ENCODE measurements at regions of chr2 and their contacts with region 1.

Region 1: DNA sequence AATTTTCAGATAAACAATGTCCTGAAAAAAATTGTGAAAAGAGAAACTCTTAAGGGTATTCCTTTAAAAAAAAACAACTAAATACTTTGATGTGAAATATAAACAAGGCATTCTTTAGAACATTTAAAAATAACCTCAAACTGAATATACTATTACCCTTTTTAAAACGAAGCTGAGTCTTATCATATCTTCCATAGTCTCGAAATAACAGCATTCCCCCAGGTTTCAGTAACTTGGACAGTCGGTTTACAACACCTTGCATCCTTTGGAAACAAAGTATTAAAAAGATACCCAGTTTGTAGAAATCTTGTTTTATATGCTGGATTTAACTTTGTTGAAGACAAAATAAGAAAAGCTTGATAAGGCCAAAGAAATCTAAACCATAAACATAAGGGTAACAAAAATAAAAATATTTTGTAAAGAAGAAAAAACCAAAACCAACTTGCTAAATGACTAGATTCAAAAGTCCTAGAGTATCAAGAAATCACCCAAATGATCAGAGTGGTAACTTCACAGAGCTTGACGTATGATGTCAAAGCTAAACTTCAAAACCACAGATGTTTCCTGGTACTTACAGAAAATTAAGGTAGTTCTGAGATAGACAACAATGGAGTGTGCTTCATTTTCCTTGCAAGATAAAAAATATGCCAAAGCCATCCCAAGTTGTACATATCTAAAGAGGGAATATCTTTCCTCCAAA is 107.8 kb downstream of the METTL8 start:
- DNase-seq: no peak
- H3K4me3 ChIP-seq: no peak overlapping the region
- H3K27ac ChIP-seq: peak overlapping the region; percentile 100
- H3K4me1 ChIP-seq: peaks cover 93% of the 10 kb centered on the region
- CTCF ChIP-seq: no peak

Region 2: DNA sequence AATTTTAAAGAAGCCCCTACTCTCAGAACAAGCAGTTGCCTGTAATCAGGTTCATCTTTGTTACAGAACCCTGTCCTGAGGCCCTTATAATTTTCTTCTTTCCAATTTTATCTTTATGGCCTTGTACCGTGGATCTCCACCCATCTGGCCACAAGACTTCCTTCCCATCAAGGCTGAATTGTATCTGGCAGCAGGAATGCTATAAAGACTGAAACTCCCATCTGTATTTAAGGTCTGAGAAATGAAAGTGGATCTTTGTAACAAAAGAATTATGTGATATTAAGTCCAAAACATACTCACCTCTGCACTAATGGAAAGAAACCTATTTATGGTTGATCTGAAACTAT is 16.0 kb after region 1 on chr2:
- CTCF ChIA-PET with region 1: no interaction called
- POLR2A ChIA-PET with region 1: interaction called, 266 read pairs
- intact Hi-C with region 1: no loop called
- DNase-seq: no peak
- H3K4me3 ChIP-seq: no peak overlapping the region
- H3K27ac ChIP-seq: peak overlapping the region; percentile 52
- H3K4me1 ChIP-seq: peaks cover 76% of the 10 kb centered on the region
- CTCF ChIP-seq: no peak

Region 3: DNA sequence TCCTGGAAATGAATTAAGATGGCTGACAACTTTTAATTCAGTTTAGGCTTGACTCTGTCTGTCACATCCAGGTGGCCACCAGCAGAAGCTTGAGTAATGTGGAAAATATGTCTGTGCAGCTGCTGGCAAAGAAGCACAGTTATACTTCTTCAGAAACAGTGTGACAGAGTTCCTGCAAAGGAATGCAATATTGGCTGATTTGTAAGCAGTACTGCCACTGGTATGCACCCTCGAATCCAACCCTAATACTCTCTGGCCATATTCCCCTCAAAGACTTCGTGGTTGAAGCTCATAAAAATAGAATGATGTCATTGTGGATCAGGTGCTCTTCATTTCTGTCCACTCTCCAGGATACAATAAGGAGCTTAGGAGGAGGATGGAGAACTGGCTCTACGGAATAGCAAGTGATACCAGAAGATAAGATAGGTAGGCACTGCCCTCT is 21.6 kb after region 1 on chr2:
- CTCF ChIA-PET with region 1: no interaction called
- POLR2A ChIA-PET with region 1: interaction called, 15 read pairs
- intact Hi-C with region 1: no loop called
- DNase-seq: peak; percentile 67
- H3K4me3 ChIP-seq: no peak overlapping the region
- H3K27ac ChIP-seq: peak overlapping the region; percentile 48
- H3K4me1 ChIP-seq: peaks cover 56% of the 10 kb centered on the region
- CTCF ChIP-seq: no peak

Region 4: DNA sequence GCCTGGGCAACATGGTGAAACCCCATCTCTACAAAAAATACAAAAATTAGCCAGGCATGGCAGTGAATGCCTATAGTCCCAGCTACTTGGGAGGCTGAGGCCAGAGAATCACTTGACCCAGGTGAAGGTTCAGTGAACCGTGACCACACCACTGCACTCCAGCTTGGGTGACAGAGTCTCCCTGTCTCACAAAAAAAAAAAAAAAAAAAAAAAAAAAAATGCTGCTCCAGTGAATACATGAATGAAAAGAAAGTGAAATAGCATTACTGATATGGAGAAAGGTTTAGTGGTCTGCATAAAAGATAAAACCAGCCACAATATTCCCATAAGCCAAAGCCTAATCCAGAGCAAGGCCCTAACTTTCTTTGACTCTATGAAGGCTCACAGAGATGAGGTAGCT is 63.3 kb after region 1 on chr2:
- CTCF ChIA-PET with region 1: no interaction called
- POLR2A ChIA-PET with region 1: interaction called, 19 read pairs
- intact Hi-C with region 1: no loop called
- DNase-seq: peak; percentile 76
- H3K4me3 ChIP-seq: no peak overlapping the region
- H3K27ac ChIP-seq: peak overlapping the region; percentile 78
- H3K4me1 ChIP-seq: peaks cover 88% of the 10 kb centered on the region
- CTCF ChIP-seq: no peak

Region 5: DNA sequence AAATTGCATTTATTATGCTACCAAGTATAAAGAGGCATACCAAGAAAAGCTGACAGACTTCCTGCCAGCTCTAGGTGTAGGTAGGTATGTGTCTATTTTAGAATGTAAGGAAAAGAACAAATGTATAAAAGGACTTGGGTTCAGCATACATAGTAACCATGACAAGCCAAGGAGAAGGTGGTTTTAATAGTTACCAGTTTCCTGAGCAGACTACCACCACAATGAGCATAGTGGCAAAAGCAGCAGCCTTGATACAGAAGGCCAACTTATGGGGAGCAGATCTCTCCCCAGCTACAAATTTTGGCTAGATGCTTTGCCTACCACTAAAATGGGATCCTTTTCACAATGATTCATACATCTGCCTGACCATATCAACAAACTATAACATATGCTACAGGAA is 73.3 kb after region 1 on chr2:
- CTCF ChIA-PET with region 1: no interaction called
- POLR2A ChIA-PET with region 1: interaction called, 13 read pairs
- intact Hi-C with region 1: no loop called
- DNase-seq: no peak
- H3K4me3 ChIP-seq: no peak overlapping the region
- H3K27ac ChIP-seq: no peak overlapping the region
- H3K4me1 ChIP-seq: peaks cover 16% of the 10 kb centered on the region
- CTCF ChIP-seq: no peak

Region 6: GRCh38 chr2:171407030-171407675 is 81.1 kb after region 1 on chr2:
- CTCF ChIA-PET with region 1: interaction called, 4 read pairs
- POLR2A ChIA-PET with region 1: interaction called, 13 read pairs
- intact Hi-C with region 1: no loop called
- DNase-seq: no peak
- H3K4me3 ChIP-seq: no peak overlapping the region
- H3K27ac ChIP-seq: peak overlapping the region; percentile 49
- H3K4me1 ChIP-seq: peaks cover 44% of the 10 kb centered on the region
- CTCF ChIP-seq: no peak

Region 7: DNA sequence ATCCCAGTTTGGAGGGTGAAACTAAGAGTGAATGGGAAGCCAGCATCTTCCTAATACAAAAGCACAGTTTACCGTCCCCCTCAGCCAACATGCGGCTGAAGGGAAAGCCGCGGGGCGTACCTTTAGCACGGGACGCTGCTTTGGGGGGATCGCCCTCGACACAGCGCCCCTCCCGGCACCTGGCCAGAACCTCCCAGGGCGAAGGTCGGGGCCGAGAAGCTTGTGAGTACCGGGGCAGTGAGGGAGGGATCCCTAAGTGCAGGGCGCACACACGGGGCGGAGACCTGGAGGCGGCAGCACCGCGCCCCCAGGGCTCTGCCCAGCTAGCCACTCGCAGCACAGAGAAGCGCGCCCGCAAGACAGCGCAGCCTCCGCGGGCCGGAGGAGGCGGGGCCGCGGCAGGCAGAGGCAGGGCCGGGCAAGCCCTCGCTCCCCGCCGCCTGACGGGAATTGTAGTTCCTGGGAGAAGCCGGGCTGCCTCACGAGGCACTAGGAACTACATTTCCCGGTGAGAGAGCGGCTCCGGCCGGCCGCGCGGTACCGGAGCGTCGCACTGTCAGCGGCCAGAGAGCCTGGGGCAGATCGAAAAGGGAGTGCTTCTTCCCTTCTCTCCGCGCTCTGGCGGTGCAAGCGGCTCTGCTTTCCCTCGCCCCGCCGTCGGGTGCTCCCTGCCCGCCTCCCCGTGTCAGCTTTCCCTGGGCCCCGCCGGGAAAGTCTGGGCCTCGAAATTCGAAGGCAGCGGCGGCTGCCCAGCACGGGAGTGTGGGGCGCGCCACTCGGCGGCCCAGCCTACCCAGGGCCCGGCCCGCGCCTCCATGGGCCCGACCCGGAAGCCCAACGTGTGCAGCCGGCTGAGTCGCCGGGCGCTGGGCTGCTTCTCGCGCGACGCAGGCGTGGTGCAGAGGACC is 108.0 kb after region 1 on chr2 and contains the starts of genes DCAF17 and METTL8:
- CTCF ChIA-PET with region 1: no interaction called
- POLR2A ChIA-PET with region 1: interaction called, 6 read pairs
- intact Hi-C with region 1: loop called (anchors 1 kb)
- DNase-seq: peak; percentile 99
- H3K4me3 ChIP-seq: peak within 1 kb of the TSS; percentile 88
- H3K27ac ChIP-seq: peak within 1 kb of the TSS; percentile 93
- H3K4me1 ChIP-seq: peaks cover 23% of the 10 kb centered on the region
- CTCF ChIP-seq: peak; percentile 91
- total RNA-seq, gene DCAF17: 24.1 and 25.9 TPM in 2 replicates
- total RNA-seq, gene METTL8: 6.9 and 11.8 TPM in 2 replicates